Activated CD4-positive, alpha-beta T cell treated with anti-CD3 and anti-CD28 coated beads for 36 hours (primary cell): ENCODE measurements at regions of chr4 and their contacts with region 1.

Region 1: GRCh38 chr4:6250235-6250983 is 19.2 kb upstream of the WFS1 start:
- DNase-seq: no peak
- ATAC-seq: peak; percentile 47
- H3K4me3 Mint-ChIP-seq: no peak overlapping the region
- H3K27ac Mint-ChIP-seq: no peak overlapping the region
- H3K4me1 Mint-ChIP-seq: no peaks in the 10 kb centered on the region
- H3K27me3 Mint-ChIP-seq: peaks cover 30% of the 10 kb centered on the region

Region 2: DNA sequence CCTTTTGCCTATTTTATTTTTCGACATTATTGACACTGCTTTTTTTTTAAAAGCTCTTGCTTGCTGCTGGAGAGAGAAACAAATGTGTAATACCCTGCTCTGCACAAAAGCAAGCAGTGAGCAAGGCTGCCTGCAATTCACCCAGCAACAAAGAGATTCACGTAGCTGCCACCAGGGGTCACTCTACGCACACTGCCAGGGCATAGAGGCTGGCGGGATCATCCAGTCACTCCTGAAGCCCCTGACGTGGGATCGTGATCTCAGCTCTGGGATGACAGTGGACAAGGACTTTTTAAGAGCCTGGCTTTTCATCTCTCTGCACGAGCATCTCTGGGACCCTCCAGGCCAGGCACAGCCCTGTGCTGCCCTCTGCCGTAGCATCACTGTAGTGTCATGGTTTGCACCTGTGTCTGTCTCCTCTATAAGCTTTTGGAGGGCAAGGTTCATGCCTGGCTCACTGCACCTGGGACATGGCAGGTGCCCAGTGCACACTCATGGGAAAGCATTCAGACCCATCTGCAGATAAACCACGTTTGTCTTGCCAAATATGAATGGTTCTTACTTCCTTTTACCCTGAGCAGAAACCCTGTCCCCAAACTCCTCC is 252.0 kb before region 1 on chr4:
- CTCF ChIA-PET with region 1: interaction called, 8 read pairs
- POLR2A ChIA-PET with region 1: no interaction called
- intact Hi-C with region 1: loop called (anchors 2 to 10 kb)
- DNase-seq: peak; percentile 66
- ATAC-seq: peak; percentile 44
- H3K4me3 Mint-ChIP-seq: no peak overlapping the region
- H3K27ac Mint-ChIP-seq: no peak overlapping the region
- H3K4me1 Mint-ChIP-seq: peaks cover 2% of the 10 kb centered on the region
- H3K27me3 Mint-ChIP-seq: peaks cover 13% of the 10 kb centered on the region

Region 3: DNA sequence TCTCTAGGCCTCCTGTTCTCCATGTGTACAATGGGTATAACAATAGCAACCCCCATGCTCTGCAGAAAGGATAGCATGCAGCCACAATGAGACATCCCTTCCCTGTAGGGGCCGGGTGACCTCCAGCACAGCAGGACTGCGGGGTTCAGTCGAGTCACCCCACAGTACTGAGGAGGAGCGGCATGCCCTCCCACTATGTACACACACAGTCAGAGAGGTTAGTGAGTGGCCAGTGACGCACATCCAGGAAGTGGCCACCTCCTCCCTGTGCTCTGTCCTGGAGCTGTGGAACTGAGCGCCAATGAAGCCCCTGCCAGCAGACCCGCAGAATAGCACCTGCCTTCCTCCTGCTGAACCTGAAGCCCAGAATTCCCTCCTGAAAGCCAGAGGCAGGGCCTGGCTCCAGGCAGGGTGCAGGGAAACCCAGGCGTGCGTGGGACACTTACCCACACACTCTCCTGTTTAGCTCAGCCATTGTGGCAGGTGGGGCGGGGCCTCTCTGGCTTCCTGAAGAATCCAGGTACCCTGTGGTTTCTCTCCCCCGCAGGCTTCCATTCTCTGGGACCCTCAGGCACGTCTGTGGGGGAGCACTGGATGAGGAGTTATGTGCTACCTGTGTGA is 69.2 kb after region 1 on chr4:
- CTCF ChIA-PET with region 1: interaction called, 21 read pairs
- POLR2A ChIA-PET with region 1: no interaction called
- intact Hi-C with region 1: no loop called
- DNase-seq: no peak
- ATAC-seq: no peak
- H3K4me3 Mint-ChIP-seq: no peak overlapping the region
- H3K27ac Mint-ChIP-seq: no peak overlapping the region
- H3K4me1 Mint-ChIP-seq: no peaks in the 10 kb centered on the region
- H3K27me3 Mint-ChIP-seq: peaks cover 25% of the 10 kb centered on the region

Region 4: GRCh38 chr4:6546681-6547447 is 296.5 kb after region 1 on chr4:
- CTCF ChIA-PET with region 1: interaction called, 4 read pairs
- POLR2A ChIA-PET with region 1: no interaction called
- intact Hi-C with region 1: loop called in 1 of 2 experiments (anchors 1 kb)
- DNase-seq: peak; percentile 67
- ATAC-seq: peak; percentile 60
- H3K4me3 Mint-ChIP-seq: no peak overlapping the region
- H3K27ac Mint-ChIP-seq: no peak overlapping the region
- H3K4me1 Mint-ChIP-seq: no peaks in the 10 kb centered on the region
- H3K27me3 Mint-ChIP-seq: peaks cover 24% of the 10 kb centered on the region